A673 (cell line): ENCODE measurements at regions of chr17 and their contacts with region 1.

Region 1: DNA sequence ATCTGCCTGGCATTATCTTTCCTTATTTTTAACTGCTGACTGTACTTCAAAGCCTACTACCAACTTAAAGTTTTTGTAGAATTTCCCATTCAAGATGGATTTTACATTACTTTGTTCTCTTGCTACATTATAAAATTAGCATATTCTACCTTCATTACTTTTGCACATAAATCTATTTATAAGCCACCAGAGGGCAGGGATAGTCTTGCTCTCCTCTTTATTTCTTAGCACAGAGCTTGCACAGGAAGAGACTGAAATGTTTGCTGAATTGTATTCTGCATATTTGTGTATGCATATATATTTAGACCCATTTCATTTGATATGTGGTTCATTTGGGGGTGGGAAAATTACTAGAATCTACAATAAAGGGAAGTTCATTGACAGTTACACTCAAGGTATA is 108.0 kb downstream of the SKAP1 start:
- DNase-seq: peak; percentile 29
- H3K4me3 ChIP-seq: no peak overlapping the region
- H3K27ac ChIP-seq: no peak overlapping the region
- H3K4me1 ChIP-seq: no peaks in the 10 kb centered on the region
- H3K27me3 ChIP-seq: no peaks in the 10 kb centered on the region
- CTCF ChIP-seq: peak; percentile 44

Region 2: DNA sequence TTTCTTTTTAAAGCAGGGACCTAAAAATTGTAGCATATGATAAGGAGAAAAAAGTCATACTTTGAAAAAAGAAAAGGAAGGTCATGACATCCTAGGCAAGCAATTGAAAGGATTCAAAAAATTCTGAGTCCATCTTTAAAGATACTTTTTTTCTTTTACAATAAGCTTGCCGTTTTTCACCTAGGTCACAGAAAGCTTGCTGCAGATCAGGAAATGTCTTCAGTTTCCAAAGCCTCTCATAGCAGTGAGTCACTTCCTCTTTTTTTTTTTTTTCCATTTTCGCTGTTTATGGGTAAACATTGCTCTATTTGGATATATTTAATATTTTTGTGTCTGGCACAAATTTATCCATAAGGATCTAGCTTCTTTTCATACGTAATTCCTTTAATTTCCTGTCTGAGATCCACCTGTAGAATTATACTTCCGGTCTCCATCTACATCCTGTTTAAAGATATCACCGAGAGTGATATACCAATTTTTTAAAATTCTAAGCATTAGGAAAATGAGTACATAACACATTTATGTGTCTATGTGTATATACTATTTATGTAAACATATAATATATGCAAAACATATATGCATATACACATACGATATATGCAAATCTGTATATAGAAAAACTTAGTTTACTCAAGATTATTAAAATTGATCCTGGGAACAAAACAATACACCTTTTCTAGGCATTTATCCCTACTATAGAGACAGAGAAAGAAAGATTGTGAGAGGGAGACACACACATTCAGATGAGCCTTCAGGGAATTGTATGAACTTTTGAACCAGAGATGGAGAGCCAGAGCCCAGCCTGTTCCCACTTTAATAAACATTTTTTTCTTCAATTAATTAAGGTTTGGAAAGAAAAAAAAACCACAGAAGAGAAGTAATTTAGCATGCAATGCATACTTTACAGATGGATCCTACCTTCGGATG is 26.4 kb before region 1 on chr17:
- CTCF ChIA-PET with region 1: no interaction called
- POLR2A ChIA-PET with region 1: no interaction called
- intact Hi-C with region 1: no loop called
- DNase-seq: peak; percentile 45
- H3K4me3 ChIP-seq: no peak overlapping the region
- H3K27ac ChIP-seq: peak overlapping the region; percentile 43
- H3K4me1 ChIP-seq: peaks cover 19% of the 10 kb centered on the region
- H3K27me3 ChIP-seq: no peaks in the 10 kb centered on the region
- CTCF ChIP-seq: no peak

Region 3: GRCh38 chr17:48307814-48308411 is 14.1 kb before region 1 on chr17:
- CTCF ChIA-PET with region 1: no interaction called
- POLR2A ChIA-PET with region 1: no interaction called
- intact Hi-C with region 1: no loop called
- DNase-seq: peak; percentile 75
- H3K4me3 ChIP-seq: no peak overlapping the region
- H3K27ac ChIP-seq: no peak overlapping the region
- H3K4me1 ChIP-seq: no peaks in the 10 kb centered on the region
- H3K27me3 ChIP-seq: no peaks in the 10 kb centered on the region
- CTCF ChIP-seq: peak; percentile 93

Region 4: GRCh38 chr17:48344246-48344645 is 22.2 kb after region 1 on chr17:
- CTCF ChIA-PET with region 1: no interaction called
- POLR2A ChIA-PET with region 1: no interaction called
- intact Hi-C with region 1: no loop called
- DNase-seq: no peak
- H3K4me3 ChIP-seq: no peak overlapping the region
- H3K27ac ChIP-seq: no peak overlapping the region
- H3K4me1 ChIP-seq: no peaks in the 10 kb centered on the region
- H3K27me3 ChIP-seq: no peaks in the 10 kb centered on the region
- CTCF ChIP-seq: no peak

Region 5: GRCh38 chr17:48391444-48391843 is 69.4 kb after region 1 on chr17:
- CTCF ChIA-PET with region 1: no interaction called
- POLR2A ChIA-PET with region 1: interaction called, 10 read pairs
- intact Hi-C with region 1: no loop called
- DNase-seq: no peak
- H3K4me3 ChIP-seq: no peak overlapping the region
- H3K27ac ChIP-seq: no peak overlapping the region
- H3K4me1 ChIP-seq: peaks cover 38% of the 10 kb centered on the region
- H3K27me3 ChIP-seq: peaks cover 8% of the 10 kb centered on the region
- CTCF ChIP-seq: no peak